ENCODE measurements at regions of chr18 and their contacts with region 1.

Region 1: GRCh38 chr18:37742436-37742835 is 176.8 kb upstream of the CELF4 start:
- DNase-seq: no peak
- H3K4me3 ChIP-seq: no peak overlapping the region
- H3K27ac ChIP-seq: no peak overlapping the region
- H3K4me1 ChIP-seq: no peaks in the 10 kb centered on the region
- H3K27me3 ChIP-seq: no peaks in the 10 kb centered on the region
- CTCF ChIP-seq: no peak
- POLR2A ChIP-seq: no peak

Region 2: GRCh38 chr18:38664929-38665328 is 922.5 kb after region 1 on chr18:
- intact Hi-C with region 1: loop called (anchors 5 kb)
- DNase-seq: no peak
- H3K4me3 ChIP-seq: no peak overlapping the region
- H3K27ac ChIP-seq: no peak overlapping the region
- H3K4me1 ChIP-seq: no peaks in the 10 kb centered on the region
- H3K27me3 ChIP-seq: no peaks in the 10 kb centered on the region
- CTCF ChIP-seq: no peak
- POLR2A ChIP-seq: no peak

Measured in uterus (tissue), 4 donors.